ENCODE measurements at regions of chr6 and their contacts with region 1.

Region 1: GRCh38 chr6:52180787-52181558 is 5.2 kb upstream of the IL17A start:
- DNase-seq: no peak
- ATAC-seq: no peak
- H3K4me3 ChIP-seq: no peak overlapping the region
- H3K27ac ChIP-seq: no peak overlapping the region
- H3K4me1 ChIP-seq: no peaks in the 10 kb centered on the region
- H3K27me3 ChIP-seq: no peaks in the 10 kb centered on the region
- CTCF ChIP-seq: no peak
- POLR2A ChIP-seq: no peak
- RAD21 ChIP-seq: no peak

Region 2: GRCh38 chr6:50442531-50443040 is 1738.4 kb before region 1 on chr6:
- CTCF ChIA-PET with region 1: interaction called, 10 read pairs
- POLR2A ChIA-PET with region 1: no interaction called
- dilution Hi-C with region 1: no loop called
- in situ Hi-C with region 1: no loop called
- intact Hi-C with region 1: no loop called
- DNase-seq: no peak
- ATAC-seq: no peak
- H3K4me3 ChIP-seq: no peak overlapping the region
- H3K27ac ChIP-seq: no peak overlapping the region
- H3K4me1 ChIP-seq: no peaks in the 10 kb centered on the region
- H3K27me3 ChIP-seq: no peaks in the 10 kb centered on the region
- CTCF ChIP-seq: no peak
- POLR2A ChIP-seq: no peak
- RAD21 ChIP-seq: no peak

Region 3: GRCh38 chr6:50724381-50725124 is 1456.4 kb before region 1 on chr6:
- CTCF ChIA-PET with region 1: no interaction called
- POLR2A ChIA-PET with region 1: no interaction called
- dilution Hi-C with region 1: no loop called
- in situ Hi-C with region 1: no loop called
- intact Hi-C with region 1: no loop called
- DNase-seq: no peak
- ATAC-seq: no peak
- H3K4me3 ChIP-seq: no peak overlapping the region
- H3K27ac ChIP-seq: no peak overlapping the region
- H3K4me1 ChIP-seq: no peaks in the 10 kb centered on the region
- H3K27me3 ChIP-seq: peaks cover 2% of the 10 kb centered on the region
- CTCF ChIP-seq: no peak
- POLR2A ChIP-seq: no peak
- RAD21 ChIP-seq: no peak

Region 4: GRCh38 chr6:51868591-51869355 is 312.2 kb before region 1 on chr6:
- CTCF ChIA-PET with region 1: no interaction called
- POLR2A ChIA-PET with region 1: no interaction called
- dilution Hi-C with region 1: no loop called
- in situ Hi-C with region 1: no loop called
- intact Hi-C with region 1: no loop called
- DNase-seq: no peak
- ATAC-seq: no peak
- H3K4me3 ChIP-seq: no peak overlapping the region
- H3K27ac ChIP-seq: no peak overlapping the region
- H3K4me1 ChIP-seq: no peaks in the 10 kb centered on the region
- H3K27me3 ChIP-seq: no peaks in the 10 kb centered on the region
- CTCF ChIP-seq: no peak
- POLR2A ChIP-seq: no peak
- RAD21 ChIP-seq: no peak

Measured in IMR-90 (cell line).